PC-9 (cell line): ENCODE measurements at regions of chr10 and their contacts with region 1.

Region 1: GRCh38 chr10:88582806-88583583 is at the start of gene RNLS:
- DNase-seq: no peak
- H3K4me3 ChIP-seq: no peak within 1 kb of the TSS
- H3K27ac ChIP-seq: no peak within 1 kb of the TSS
- H3K4me1 ChIP-seq: no peaks in the 10 kb centered on the region
- H3K27me3 ChIP-seq: no peaks in the 10 kb centered on the region
- CTCF ChIP-seq: no peak
- total RNA-seq, gene RNLS: not detected in 2 replicates

Region 2: DNA sequence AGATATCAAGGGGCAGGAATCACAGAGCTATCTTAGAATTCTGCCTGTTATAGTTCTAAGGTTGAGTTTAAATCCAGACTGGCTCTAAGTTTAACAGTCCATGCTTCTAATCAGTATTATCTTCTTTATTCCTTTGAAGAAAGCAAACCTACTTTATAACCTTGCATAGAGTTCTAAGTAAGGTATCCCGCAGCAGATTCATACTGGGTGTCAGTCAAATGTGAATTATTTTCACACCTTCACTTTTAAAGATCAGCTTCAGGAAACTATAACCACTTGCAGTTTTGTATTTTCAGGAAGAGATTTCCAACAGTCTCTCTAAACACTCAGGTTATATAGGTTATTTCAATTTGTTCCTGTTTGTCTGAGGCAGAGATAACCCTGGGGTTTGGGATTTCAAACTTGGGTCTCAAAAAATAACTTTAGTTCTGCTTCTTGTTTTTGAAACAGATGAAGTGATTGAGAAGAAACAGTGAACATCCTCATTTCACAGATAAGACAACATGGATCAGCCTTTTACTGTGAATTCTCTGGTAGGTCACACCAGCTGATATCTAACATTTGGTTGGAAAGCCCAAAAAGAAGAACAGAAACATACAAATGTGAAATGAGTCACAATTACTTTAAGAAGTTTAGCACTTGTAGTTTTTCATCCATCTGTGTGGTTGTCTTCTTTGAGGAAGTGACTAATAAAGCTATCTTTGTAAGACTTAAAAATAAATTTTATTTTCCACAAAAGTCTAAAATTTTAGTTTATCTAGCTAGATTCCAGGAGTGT is 318.4 kb after region 1 on chr10:
- CTCF ChIA-PET with region 1: no interaction called
- POLR2A ChIA-PET with region 1: no interaction called
- intact Hi-C with region 1: no loop called
- DNase-seq: no peak
- H3K4me3 ChIP-seq: no peak overlapping the region
- H3K27ac ChIP-seq: no peak overlapping the region; the same call in 1 of the 2 replicates
- H3K4me1 ChIP-seq: peaks cover 19% of the 10 kb centered on the region
- H3K27me3 ChIP-seq: no peaks in the 10 kb centered on the region
- CTCF ChIP-seq: no peak

Region 3: DNA sequence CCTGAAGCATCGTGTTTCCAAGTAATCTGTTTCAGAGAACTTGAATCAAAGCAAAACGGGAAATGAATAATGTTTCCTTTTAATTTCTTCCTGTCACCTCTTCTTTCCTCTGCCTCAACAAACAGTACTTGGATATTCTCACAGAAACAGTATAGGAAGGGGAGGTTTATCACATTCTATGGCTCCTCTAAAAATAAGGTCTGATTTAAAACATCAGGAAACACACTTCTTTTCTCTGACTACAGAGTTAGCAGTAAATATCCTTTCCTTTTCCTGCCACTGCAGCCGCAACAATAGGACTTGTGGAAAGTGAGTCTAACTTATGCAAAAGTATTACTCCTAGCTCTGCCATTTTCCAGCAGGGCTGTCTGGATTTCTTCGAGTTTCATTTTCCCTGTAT is 561.8 kb after region 1 on chr10:
- CTCF ChIA-PET with region 1: no interaction called
- POLR2A ChIA-PET with region 1: interaction called, 16 read pairs
- intact Hi-C with region 1: no loop called
- DNase-seq: no peak
- H3K4me3 ChIP-seq: no peak overlapping the region
- H3K27ac ChIP-seq: no peak overlapping the region
- H3K4me1 ChIP-seq: no peaks in the 10 kb centered on the region
- H3K27me3 ChIP-seq: no peaks in the 10 kb centered on the region
- CTCF ChIP-seq: no peak